ENCODE measurements at regions of chr2 and their contacts with region 1.

Region 1: GRCh38 chr2:131492418-131493198 is 411 bp upstream of the MZT2A start:
- DNase-seq: peak; percentile 82 to 91 (median 88)
- H3K4me3 ChIP-seq: peak overlapping the region; percentile 57 to 96 (median 86)
- H3K27ac ChIP-seq: peak overlapping the region; percentile 40 to 96 (median 89)
- H3K27me3 ChIP-seq: no peaks in the 10 kb centered on the region
- CTCF ChIP-seq: peak; percentile 58 to 93 (median 76)

Region 2: GRCh38 chr2:131413148-131413747 is 79.4 kb before region 1 on chr2:
- intact Hi-C with region 1: loop called in 1 of 2 experiments (anchors 5 kb)
- DNase-seq: no peak
- H3K4me3 ChIP-seq: peak overlapping the region in 1 of 59 donors; percentile 1
- H3K27ac ChIP-seq: no peak overlapping the region
- H3K27me3 ChIP-seq: peaks cover 0 to 31% (median 9%) of the 10 kb centered on the region in 45 donors
- CTCF ChIP-seq: peak; percentile 58 to 93 (median 82)

Region 3: DNA sequence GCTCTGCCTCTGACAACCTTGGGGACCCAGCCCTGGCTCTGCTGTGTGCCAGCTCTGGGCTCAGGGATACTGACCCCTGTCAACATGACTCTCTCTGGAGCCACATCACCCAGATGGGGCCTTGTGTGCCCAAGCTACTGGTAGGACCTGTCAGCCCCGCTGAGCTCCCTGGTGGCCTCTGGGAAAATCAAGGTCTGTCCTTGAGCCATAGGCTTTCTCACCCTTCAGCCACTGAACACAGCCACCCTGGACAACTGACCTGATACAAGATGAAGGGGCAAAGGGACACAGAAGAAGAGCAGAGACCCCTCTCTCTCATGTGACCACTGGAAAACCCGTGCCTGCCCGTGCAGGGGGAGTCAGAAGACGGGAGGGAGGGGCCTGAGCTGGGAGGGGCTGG is 42.9 kb after region 1 on chr2:
- intact Hi-C with region 1: no loop called
- DNase-seq: peak in 1 of 10 donors; percentile 26
- H3K4me3 ChIP-seq: no peak overlapping the region
- H3K27ac ChIP-seq: no peak overlapping the region
- H3K27me3 ChIP-seq: no peaks in the 10 kb centered on the region
- CTCF ChIP-seq: no peak

Measured in dorsolateral prefrontal cortex (tissue), 120 donors.